BJ (cell line): ENCODE measurements at regions of chr9 and their contacts with region 1.

Region 1: DNA sequence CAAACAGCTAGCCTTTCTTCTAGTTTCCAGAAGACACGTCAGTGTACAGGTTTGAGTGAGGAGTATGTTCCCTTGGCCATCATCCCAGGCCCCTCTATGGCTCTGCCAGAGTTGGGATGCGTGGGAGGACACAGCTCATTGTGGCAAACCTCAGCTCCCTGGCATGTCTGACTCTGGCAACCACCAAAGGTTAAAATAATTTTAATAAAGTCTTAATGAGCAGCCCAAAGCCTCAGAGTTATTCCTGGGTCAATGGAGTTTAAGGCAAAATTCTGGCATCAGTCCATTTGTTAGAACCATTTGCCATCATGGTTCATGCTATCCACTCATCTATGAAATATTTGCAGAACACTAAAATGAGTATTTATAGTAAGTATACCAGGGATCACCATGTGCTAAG is 79.8 kb upstream of the PAPPA start:
- DNase-seq: no peak
- H3K4me3 ChIP-seq: no peak overlapping the region
- H3K27me3 ChIP-seq: no peaks in the 10 kb centered on the region
- CTCF ChIP-seq: no peak

Region 2: GRCh38 chr9:116147821-116148220 is 74.0 kb after region 1 on chr9:
- CTCF ChIA-PET with region 1: interaction called, 3 read pairs
- POLR2A ChIA-PET with region 1: interaction called, 10 read pairs
- DNase-seq: no peak
- H3K4me3 ChIP-seq: no peak overlapping the region
- H3K27me3 ChIP-seq: no peaks in the 10 kb centered on the region
- CTCF ChIP-seq: no peak